Aorta (tissue), 5 donors: ENCODE measurements at regions of chr11 and their contacts with region 1.

Region 1: DNA sequence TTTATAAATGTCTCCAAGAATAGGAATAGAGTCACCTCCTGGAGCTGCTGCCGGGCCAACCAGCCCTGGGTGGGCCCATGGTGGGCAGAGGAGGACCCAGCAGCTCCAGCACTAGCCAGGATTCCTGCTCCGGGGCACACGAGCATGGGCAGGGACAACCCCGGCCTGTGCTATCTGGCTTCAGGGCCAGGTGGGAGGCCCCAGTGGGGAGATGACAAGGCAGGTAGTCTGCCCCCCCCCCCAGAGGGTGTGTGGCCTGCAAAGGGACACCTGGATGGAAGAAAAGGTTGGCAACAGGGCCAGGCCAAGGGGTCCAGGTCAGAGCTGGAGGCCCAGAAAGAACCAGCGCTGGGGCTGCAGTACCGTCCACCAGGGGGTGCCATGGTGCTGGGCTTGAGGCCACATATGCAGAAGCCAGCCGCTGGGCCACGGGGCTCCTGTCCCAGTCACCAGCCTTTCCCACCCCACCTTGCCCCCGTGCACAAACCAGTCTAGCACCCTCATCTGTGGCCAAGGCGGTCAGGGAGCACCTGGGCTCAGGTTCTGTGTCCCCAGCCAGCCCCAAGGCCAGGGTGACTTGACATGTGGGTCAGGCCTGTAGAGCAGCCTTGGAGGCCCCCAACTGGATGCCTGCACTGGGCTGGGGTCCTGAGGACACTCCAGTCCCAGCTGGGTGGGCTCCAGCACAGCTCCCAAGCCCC is 3.5 kb downstream of the TSPAN32 start:
- DNase-seq: peak; percentile 92 to 96
- ATAC-seq: peak; percentile 85
- H3K4me3 ChIP-seq: no peak overlapping the region
- H3K27ac ChIP-seq: no peak overlapping the region
- H3K4me1 ChIP-seq: no peaks in the 10 kb centered on the region
- H3K27me3 ChIP-seq: no peaks in the 10 kb centered on the region

Region 2: GRCh38 chr11:2196970-2197770 is 108.1 kb before region 1 on chr11:
- intact Hi-C with region 1: loop called (anchors 5 to 10 kb)
- DNase-seq: peak; percentile 80 to 88
- ATAC-seq: peak; percentile 73
- H3K4me3 ChIP-seq: no peak overlapping the region
- H3K27ac ChIP-seq: no peak overlapping the region
- H3K4me1 ChIP-seq: no peaks in the 10 kb centered on the region
- H3K27me3 ChIP-seq: no peaks in the 10 kb centered on the region

Region 3: GRCh38 chr11:2208691-2209369 is 96.5 kb before region 1 on chr11:
- intact Hi-C with region 1: loop called in 1 of 2 experiments (anchors 10 kb)
- DNase-seq: peak in 1 of 2 donors; percentile 68
- ATAC-seq: no peak
- H3K4me3 ChIP-seq: no peak overlapping the region
- H3K27ac ChIP-seq: no peak overlapping the region
- H3K4me1 ChIP-seq: no peaks in the 10 kb centered on the region
- H3K27me3 ChIP-seq: no peaks in the 10 kb centered on the region

Region 4: DNA sequence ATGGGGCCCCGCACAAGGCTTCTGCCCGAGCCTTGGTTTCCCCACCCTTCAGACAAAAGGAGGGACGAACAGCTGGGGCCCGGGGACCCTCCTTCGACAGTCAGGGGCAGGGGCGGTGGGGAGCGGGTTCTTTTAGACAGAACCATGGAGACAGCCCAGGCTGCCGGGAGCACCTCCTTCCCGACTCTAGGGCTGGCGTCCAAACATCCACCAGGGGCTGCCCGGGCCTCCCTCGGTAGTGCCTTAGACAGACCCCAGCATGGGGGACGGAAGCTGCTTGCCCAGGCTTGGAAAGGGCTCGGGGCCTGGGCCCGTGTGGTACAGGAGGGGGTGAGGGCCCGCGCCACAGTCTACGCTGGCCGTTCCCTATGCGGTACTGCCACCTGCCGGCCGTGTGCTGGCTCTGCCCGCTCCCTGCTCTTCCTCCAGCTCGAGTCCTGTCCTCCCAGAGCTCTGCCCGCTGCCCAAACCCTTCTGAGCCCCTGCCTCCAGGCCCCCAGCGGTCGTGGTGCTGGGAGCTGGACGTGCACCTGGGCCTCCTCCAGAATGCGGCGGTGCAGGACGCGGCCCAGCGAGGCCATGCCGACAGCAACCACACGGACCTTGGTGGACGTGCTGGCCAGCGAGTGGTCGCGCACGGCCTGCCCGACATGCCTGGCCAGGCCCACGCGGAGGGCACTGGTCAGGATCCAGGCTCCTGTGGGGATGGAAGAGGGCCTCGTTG is 115.4 kb after region 1 on chr11:
- intact Hi-C with region 1: loop called (anchors 1 to 2 kb)
- DNase-seq: peak; percentile 76 to 92
- ATAC-seq: peak; percentile 94
- H3K4me3 ChIP-seq: no peak overlapping the region
- H3K27ac ChIP-seq: no peak overlapping the region
- H3K4me1 ChIP-seq: no peaks in the 10 kb centered on the region
- H3K27me3 ChIP-seq: no peaks in the 10 kb centered on the region